Left ventricle myocardium inferior (tissue), 1 donor: ENCODE measurements at regions of chr5 and their contacts with region 1.

Region 1: DNA sequence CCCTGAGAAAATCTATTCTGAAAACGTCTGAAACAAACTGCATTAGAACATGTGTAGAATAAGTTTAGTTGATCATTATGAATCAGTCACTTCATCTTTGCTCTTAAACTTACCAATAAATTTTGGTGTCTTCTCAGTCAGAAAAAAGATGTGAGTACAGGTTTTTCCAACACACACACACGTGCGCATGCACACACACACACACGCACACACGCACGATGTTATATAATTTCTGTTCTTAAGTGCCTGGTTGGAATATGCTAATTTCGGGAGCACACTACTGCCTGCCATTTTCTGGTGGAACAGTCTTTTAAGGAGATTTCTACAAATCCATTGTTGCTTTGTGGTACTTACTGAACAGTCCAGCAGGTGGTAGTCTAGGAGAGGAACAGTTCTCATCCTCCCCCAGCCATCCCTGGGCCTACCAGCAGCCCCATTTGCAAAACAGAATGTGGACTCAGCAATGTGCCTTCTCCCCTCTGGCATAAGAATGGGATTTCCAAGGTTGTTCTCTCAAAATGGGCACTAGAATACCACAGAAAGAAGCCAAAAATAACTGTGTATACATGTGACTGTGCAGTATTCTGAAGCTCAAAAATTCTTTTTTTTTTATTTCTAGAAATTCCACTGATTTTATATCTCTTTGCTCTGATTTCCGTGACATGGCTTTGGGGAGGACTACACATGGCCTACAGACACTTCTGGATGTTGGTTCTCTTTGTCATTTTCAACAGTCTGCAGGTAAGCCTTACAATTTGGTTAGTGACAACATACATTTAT is 281.3 kb downstream of the ARRDC3 start:
- DNase-seq: peak; percentile 66
- H3K4me3 ChIP-seq: no peak overlapping the region
- H3K27ac ChIP-seq: peak overlapping the region; percentile 34
- H3K4me1 ChIP-seq: peaks cover 10% of the 10 kb centered on the region
- H3K27me3 ChIP-seq: no peaks in the 10 kb centered on the region
- CTCF ChIP-seq: peak; percentile 87

Region 2: DNA sequence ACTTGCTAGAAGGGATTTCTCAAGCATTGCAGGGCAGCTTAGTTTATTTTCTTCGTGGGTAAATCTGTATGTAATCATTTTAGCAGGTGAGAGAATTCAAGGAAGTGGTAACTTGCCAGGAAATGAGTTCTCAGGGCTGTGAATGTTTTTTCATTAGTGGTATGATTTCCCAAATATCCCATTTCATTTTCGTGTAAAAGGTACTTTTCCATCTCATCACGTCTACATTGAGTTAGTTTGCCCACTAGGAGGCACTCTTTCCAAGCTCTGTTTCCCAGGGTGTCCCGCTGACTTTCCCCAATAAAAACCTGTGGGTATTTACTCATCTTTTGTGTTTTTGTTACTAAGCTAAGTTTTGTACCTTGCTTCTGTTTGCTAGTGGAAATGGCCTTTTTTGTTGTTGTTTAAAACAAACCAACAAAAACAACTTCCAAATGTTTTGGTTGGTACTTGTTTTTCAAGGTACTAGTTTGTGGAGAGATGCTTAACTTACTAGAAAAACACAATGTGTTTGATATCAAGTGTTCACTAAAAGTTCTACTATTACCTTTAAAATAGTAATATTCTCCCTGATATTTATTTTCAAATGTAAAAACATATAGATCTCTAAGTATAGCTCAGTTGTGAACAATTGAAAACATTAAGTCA is 169.6 kb before region 1 on chr5:
- intact Hi-C with region 1: loop called (anchors 10 kb)
- DNase-seq: no peak
- H3K4me3 ChIP-seq: no peak overlapping the region
- H3K27ac ChIP-seq: no peak overlapping the region
- H3K4me1 ChIP-seq: peaks cover 10% of the 10 kb centered on the region
- H3K27me3 ChIP-seq: no peaks in the 10 kb centered on the region
- CTCF ChIP-seq: peak; percentile 85

Region 3: DNA sequence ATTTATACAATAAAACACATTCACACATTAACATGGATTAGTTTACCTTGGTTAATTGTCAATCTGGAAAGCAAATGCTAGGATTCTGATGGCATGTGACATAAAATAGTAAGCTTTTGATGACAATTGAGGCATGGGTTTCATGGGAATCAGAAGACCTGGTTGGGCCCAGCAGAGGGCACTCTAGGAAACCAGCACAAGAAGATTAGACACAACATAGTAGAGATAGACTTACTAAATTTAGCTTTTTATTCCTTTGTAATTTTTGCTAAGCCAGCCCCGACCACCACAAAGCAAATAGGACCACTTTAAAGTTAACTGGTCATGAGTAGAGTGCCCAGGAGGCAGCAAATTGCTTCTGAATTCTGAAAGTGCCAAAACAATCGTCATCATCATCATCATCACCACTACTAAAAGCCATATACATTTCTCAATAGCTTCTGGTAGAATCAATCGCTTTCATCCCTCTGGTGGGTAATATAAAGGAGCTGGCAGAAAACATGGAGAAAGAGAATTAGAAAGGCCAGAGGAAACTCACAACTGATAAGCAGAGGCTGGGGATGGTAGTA is 118.1 kb after region 1 on chr5:
- intact Hi-C with region 1: loop called (anchors 10 kb)
- DNase-seq: no peak
- H3K4me3 ChIP-seq: no peak overlapping the region
- H3K27ac ChIP-seq: peak overlapping the region; percentile 54
- H3K4me1 ChIP-seq: peaks cover 12% of the 10 kb centered on the region
- H3K27me3 ChIP-seq: no peaks in the 10 kb centered on the region
- CTCF ChIP-seq: peak; percentile 43

Region 4: DNA sequence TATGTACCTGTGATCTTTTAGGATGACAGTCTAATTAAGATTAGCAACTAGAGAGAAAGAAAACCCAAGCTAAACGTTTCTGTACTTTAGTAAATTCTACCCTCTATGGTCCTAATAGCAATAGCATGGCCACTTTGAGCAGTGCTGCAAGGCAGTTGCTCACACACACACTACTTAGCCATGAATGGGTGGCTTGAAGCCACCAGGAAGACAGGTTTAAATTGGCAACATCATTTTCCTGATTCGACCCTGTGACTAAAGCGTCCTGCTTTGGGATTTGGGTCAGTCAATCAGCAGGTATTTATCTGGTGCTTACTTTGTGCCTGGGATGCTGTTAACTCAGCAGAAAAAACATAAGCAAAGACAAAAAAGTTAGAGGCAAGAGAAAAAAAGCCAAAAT is 130.7 kb after region 1 on chr5:
- intact Hi-C with region 1: no loop called
- DNase-seq: no peak
- H3K4me3 ChIP-seq: no peak overlapping the region
- H3K27ac ChIP-seq: no peak overlapping the region
- H3K4me1 ChIP-seq: peaks cover 10% of the 10 kb centered on the region
- H3K27me3 ChIP-seq: no peaks in the 10 kb centered on the region
- CTCF ChIP-seq: no peak